Activated T-helper 2 cell treated with anti-CD3 and anti-CD28 coated beads, Interferon-gamma antibody, Interleukin-2, Interleukin-4, amounts not matched to agents 10 μg/mL and 5 μg/mL and 100 μg/mL, durations not matched to agents 14 hours and 24 hours and 36 hours (primary cell): ENCODE measurements at regions of chr19 and their contacts with region 1.

Region 1: DNA sequence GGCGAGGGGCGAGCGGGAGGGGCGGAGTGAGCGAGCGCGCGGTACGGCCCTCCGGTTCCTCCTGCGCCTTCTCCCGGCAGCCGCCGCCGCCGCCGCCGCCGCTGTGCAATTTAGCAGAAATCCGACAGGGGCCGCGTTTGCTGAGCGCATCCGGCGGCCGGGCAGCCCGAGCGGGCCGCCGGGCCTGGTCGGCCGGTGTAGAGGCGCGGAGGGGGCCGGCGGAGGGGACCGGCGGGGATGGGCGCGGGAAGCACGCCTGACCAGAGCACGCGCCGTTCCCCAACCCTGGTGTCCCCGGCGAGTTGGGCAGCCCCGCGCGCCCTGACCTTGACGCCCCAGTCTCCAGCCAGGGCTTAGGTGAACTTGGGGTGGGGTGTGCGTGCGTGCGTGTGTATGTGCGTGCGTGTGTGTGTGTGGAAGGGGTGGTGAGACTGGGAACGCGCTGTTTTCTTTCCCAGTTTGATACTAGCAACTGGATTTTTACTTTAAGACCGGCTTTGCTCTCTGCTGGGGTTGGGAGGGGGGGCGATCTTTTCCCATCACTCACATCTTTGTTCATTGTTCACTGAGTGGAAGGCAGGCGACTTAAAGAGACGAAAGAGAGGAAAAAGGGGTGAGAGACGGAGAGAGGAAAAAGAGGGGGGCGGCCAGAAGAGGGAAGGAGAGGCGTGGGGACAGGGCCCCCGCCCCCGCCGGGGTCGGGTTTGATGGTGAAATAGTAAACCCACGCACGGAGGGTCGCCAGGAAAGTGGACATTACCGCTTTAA is 144.3 kb upstream of the ZNF536 start:
- DNase-seq: peak; percentile 56
- H3K4me3 Mint-ChIP-seq: peak overlapping the region; percentile 39
- H3K27ac Mint-ChIP-seq: no peak overlapping the region
- H3K4me1 Mint-ChIP-seq: peaks cover 28% of the 10 kb centered on the region
- H3K27me3 Mint-ChIP-seq: peaks cover 72% of the 10 kb centered on the region

Region 2: DNA sequence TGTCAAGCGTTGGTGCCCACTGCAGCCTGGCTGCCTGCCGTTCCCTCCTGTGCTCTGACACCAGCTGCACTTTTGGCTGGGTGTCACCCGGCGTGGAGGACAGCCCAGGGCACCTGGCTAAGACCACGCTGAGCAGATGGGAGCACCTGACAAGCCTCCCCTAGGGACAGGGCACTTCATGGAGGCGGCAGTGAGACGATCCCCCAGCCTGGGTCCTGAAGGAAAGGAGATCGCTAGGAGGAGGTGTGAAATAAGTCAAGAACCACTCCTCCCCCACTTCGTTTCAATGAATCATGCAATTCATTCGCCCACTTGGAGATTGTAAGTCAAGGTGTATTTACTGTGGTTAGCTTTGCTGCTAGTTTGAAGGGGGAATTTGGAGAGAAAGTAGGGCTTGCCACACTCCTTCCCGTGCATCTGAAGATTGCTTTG is 663.3 kb before region 1 on chr19:
- intact Hi-C with region 1: no loop called
- DNase-seq: no peak
- H3K4me3 Mint-ChIP-seq: no peak overlapping the region
- H3K27ac Mint-ChIP-seq: no peak overlapping the region
- H3K4me1 Mint-ChIP-seq: peaks cover 6% of the 10 kb centered on the region
- H3K27me3 Mint-ChIP-seq: peaks cover 3% of the 10 kb centered on the region

Region 3: GRCh38 chr19:30374865-30375552 is 147.2 kb after region 1 on chr19:
- intact Hi-C with region 1: loop called (anchors 10 kb)
- DNase-seq: no peak
- H3K4me3 Mint-ChIP-seq: no peak overlapping the region
- H3K27ac Mint-ChIP-seq: no peak overlapping the region
- H3K4me1 Mint-ChIP-seq: no peaks in the 10 kb centered on the region
- H3K27me3 Mint-ChIP-seq: peaks cover 31% of the 10 kb centered on the region

Region 4: DNA sequence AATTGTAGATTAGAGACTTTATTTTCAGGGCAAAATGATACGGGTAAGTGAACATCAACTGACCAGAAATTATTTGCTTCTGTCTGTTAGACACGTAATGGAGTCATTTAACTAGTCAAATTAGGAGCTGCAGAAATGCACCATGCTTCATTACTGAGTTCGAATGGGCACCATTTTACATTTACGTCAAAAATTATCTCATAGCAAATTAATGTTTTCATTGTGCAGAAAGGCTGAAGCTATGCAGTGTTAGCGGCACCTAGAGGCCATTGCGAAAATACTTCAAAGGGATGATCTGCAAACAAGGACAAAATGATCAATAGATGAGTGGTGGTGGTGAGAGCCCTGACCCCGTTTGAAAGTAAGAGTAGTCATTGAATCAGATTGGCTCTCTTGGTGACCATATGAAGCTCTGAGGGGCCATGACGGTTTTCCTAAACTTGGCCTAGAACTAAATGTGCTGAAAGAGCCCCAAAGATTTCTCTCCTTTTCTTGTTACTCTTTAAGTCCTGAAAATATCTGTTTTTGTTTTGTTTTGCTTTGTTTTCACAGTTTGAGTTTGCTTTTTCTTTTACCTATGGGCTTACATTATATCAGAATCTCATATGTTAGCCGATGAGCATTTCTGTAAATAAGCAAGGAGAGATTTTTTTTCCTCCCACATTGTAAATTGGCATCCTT is 422.2 kb after region 1 on chr19:
- intact Hi-C with region 1: loop called (anchors 10 kb)
- DNase-seq: peak; percentile 18
- H3K4me3 Mint-ChIP-seq: no peak overlapping the region
- H3K27ac Mint-ChIP-seq: no peak overlapping the region
- H3K4me1 Mint-ChIP-seq: no peaks in the 10 kb centered on the region
- H3K27me3 Mint-ChIP-seq: no peaks in the 10 kb centered on the region

Region 5: DNA sequence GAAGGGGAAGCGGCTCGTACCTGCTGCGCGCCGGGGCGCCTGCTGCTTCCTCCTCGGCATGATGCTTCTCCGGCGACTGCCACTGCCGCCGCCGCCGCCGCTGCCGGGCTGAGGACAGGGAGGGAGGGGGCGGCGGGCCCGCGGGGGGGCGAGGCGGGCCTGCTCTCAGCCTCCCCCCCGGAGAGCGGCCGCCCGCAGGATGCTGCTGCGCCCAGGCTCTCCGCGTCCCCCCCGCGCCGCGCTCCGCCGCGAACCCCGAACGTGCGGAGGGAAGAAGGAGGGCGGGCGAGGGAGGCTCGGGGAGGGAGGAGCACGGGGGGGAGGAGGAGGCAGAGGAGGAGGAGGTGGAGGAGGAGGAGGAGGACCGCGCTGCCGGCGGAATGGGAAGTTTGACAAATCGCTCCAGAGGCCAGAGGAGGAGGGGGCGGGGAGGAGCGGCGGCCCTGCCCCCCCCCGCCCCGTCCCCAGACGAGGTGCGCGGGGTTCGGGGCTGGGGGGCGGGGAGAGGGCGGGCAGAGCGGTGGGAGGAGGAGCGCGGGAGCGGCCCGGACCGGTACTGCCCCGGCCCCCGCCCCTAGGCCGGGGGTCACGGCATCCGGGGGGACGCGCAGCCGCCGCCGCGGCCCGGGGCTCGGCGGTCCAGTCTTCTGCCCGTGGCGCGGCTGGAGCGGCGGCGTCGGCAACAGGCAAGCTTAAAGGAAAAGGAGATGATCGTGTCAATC is 1121.5 kb after region 1 on chr19 and contains the start of gene TSHZ3:
- intact Hi-C with region 1: loop called (anchors 2 kb)
- DNase-seq: no peak
- H3K4me3 Mint-ChIP-seq: peak within 1 kb of the TSS; percentile 78
- H3K27ac Mint-ChIP-seq: no peak within 1 kb of the TSS
- H3K4me1 Mint-ChIP-seq: peaks cover 13% of the 10 kb centered on the region
- H3K27me3 Mint-ChIP-seq: peaks cover 63% of the 10 kb centered on the region
- total RNA-seq, gene TSHZ3: 0.66 and 1.3 TPM in 2 replicates